Activated T-helper 2 cell treated with anti-CD3 and anti-CD28 coated beads, Interferon-gamma antibody, Interleukin-2, Interleukin-4, amounts not matched to agents 10 μg/mL and 5 μg/mL and 100 μg/mL, durations not matched to agents 14 hours and 24 hours and 36 hours (primary cell): ENCODE measurements at regions of chr4 and their contacts with region 1.

Region 1: GRCh38 chr4:155376387-155377268 is at the start of gene MAP9:
- DNase-seq: peak; percentile 84
- H3K4me3 Mint-ChIP-seq: peak within 1 kb of the TSS; percentile 87
- H3K27ac Mint-ChIP-seq: peak within 1 kb of the TSS; percentile 75
- H3K4me1 Mint-ChIP-seq: peaks cover 15% of the 10 kb centered on the region
- H3K27me3 Mint-ChIP-seq: peaks cover 7% of the 10 kb centered on the region
- total RNA-seq, gene MAP9: 5.8 TPM in 2 replicates

Region 2: GRCh38 chr4:154361450-154361849 is 1015.2 kb before region 1 on chr4:
- intact Hi-C with region 1: loop called (anchors 10 kb)
- DNase-seq: no peak
- H3K4me3 Mint-ChIP-seq: no peak overlapping the region
- H3K27ac Mint-ChIP-seq: peak overlapping the region; percentile 10
- H3K4me1 Mint-ChIP-seq: peaks cover 18% of the 10 kb centered on the region
- H3K27me3 Mint-ChIP-seq: peaks cover 30% of the 10 kb centered on the region

Region 3: GRCh38 chr4:154551872-154552686 is 824.5 kb before region 1 on chr4:
- intact Hi-C with region 1: loop called (anchors 1 kb)
- DNase-seq: peak; percentile 46
- H3K4me3 Mint-ChIP-seq: no peak overlapping the region
- H3K27ac Mint-ChIP-seq: no peak overlapping the region
- H3K4me1 Mint-ChIP-seq: peaks cover 20% of the 10 kb centered on the region
- H3K27me3 Mint-ChIP-seq: peaks cover under 1% of the 10 kb centered on the region

Region 4: GRCh38 chr4:155509555-155509954 is 132.9 kb after region 1 on chr4:
- intact Hi-C with region 1: loop called (anchors 2 kb)
- DNase-seq: no peak
- H3K4me3 Mint-ChIP-seq: no peak overlapping the region
- H3K27ac Mint-ChIP-seq: no peak overlapping the region
- H3K4me1 Mint-ChIP-seq: peaks cover 7% of the 10 kb centered on the region
- H3K27me3 Mint-ChIP-seq: peaks cover 18% of the 10 kb centered on the region

Region 5: DNA sequence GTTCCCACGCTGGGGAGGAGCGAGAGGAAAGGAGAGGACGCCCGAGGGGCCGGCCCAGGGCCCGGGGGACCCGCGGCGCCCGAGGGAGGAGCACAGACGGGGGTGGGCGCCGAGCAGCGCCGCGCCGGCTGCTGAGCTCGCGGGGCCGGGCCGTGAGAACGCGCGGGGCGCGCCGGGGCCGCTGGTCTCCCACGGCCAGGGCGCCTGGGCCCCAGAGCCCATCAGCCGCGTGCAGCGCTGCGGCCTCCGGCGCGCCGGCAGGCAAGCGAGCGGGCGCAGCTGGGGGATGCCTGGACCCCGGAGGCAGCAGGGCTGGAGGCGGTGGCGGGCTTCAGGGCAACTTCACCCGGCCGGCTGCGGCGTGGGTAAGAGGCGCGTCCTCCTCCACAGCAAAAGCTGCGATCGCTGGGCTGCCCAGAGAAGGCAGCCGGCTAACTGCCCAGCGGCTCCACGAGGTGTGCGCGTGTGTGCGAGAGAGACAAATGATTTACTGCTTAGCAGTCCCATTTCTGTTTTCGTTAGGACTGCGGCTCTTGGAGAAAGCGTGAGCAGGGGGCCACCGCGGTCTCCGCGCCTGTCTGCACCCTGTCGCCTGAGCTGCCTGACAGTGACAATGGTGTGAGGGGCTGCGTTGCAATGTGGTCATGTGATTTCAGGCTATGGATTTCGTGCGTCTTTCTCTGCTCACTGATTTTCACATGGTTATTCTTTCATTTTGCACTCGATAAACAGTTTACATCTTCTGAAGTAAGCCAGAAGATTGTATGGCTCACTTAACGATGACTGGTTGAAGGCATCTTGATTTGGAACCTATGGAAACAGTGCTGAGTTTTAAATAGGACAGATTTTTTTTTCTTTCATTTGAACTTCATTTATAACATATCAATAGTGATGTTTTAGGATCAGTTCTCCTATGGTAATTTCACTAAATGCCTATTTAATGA is 291.2 kb after region 1 on chr4:
- intact Hi-C with region 1: loop called (anchors 10 kb)
- DNase-seq: no peak
- H3K4me3 Mint-ChIP-seq: peak overlapping the region; percentile 88
- H3K27ac Mint-ChIP-seq: no peak overlapping the region
- H3K4me1 Mint-ChIP-seq: peaks cover 14% of the 10 kb centered on the region
- H3K27me3 Mint-ChIP-seq: peaks cover 79% of the 10 kb centered on the region

Region 6: GRCh38 chr4:155787113-155787710 is 410.6 kb after region 1 on chr4:
- intact Hi-C with region 1: loop called (anchors 5 kb)
- DNase-seq: no peak
- H3K4me3 Mint-ChIP-seq: no peak overlapping the region
- H3K27ac Mint-ChIP-seq: no peak overlapping the region
- H3K4me1 Mint-ChIP-seq: peaks cover 4% of the 10 kb centered on the region
- H3K27me3 Mint-ChIP-seq: no peaks in the 10 kb centered on the region